ENCODE measurements at regions of chr1 and their contacts with region 1.

Region 1: GRCh38 chr1:113797472-113797871 is 14.8 kb downstream of the RSBN1 start:
- DNase-seq: no peak
- H3K4me3 ChIP-seq: no peak overlapping the region
- H3K27ac ChIP-seq: no peak overlapping the region
- H3K4me1 ChIP-seq: peaks cover 3% of the 10 kb centered on the region
- H3K27me3 ChIP-seq: no peaks in the 10 kb centered on the region
- CTCF ChIP-seq: no peak

Region 2: GRCh38 chr1:113759333-113760101 is 38.0 kb before region 1 on chr1 and contains the start of gene PHTF1:
- intact Hi-C with region 1: loop called (anchors 5 kb)
- DNase-seq: peak; percentile 71
- H3K4me3 ChIP-seq: peak within 1 kb of the TSS; percentile 91
- H3K27ac ChIP-seq: peak within 1 kb of the TSS; percentile 94
- H3K4me1 ChIP-seq: no peaks in the 10 kb centered on the region
- H3K27me3 ChIP-seq: no peaks in the 10 kb centered on the region
- CTCF ChIP-seq: no peak
- total RNA-seq, gene PHTF1: 8.5 to 9.8 TPM

Measured in colonic mucosa (tissue), 4 donors.